ENCODE measurements at regions of chr13 and their contacts with region 1.

Region 1: DNA sequence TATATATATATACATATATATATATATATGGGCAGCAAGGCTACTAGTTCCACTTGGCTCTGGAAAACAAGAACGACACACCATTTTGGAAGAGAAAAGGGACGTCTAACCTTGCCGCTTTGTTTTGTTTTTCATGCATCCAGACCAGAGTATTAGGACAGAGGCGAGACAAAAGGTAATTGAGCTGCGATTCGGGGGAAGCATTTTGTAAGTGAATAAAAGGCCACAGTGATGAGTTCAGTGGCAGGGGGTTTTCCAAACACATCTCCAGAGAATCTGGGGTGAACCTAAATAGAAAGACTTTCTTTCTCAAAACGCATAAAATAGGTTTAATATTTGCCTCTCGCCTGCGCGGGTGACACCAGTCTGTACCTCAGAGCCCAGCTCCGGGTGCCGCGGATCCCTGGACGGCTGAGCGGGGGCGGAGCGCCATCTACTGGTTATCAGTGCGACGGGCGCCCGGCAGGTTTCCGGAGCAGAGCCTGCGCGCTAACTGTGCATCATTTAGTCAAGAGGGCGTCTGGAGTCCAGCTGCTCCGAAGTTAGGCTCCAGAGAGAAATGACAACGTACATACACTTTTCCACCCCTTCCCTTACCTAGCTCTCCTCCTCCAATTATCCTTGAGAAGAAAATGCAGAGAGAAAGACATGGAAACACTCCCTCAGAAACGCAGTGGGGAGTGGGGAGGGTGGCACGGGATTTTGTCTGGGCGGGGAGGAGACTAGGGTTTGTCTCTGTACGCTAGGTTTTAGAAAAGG is 262.3 kb downstream of the TBC1D4 start:
- DNase-seq: peak; percentile 71
- H3K4me3 Mint-ChIP-seq: peak overlapping the region; percentile 45
- H3K27ac Mint-ChIP-seq: no peak overlapping the region
- H3K4me1 Mint-ChIP-seq: peaks cover 9% of the 10 kb centered on the region
- H3K27me3 Mint-ChIP-seq: peaks cover 49% of the 10 kb centered on the region

Region 2: GRCh38 chr13:73754727-73755292 is 1464.8 kb before region 1 on chr13:
- intact Hi-C with region 1: loop called (anchors 1 kb)
- DNase-seq: no peak
- H3K4me3 Mint-ChIP-seq: no peak overlapping the region
- H3K27ac Mint-ChIP-seq: no peak overlapping the region
- H3K4me1 Mint-ChIP-seq: peaks cover 18% of the 10 kb centered on the region
- H3K27me3 Mint-ChIP-seq: no peaks in the 10 kb centered on the region

Region 3: DNA sequence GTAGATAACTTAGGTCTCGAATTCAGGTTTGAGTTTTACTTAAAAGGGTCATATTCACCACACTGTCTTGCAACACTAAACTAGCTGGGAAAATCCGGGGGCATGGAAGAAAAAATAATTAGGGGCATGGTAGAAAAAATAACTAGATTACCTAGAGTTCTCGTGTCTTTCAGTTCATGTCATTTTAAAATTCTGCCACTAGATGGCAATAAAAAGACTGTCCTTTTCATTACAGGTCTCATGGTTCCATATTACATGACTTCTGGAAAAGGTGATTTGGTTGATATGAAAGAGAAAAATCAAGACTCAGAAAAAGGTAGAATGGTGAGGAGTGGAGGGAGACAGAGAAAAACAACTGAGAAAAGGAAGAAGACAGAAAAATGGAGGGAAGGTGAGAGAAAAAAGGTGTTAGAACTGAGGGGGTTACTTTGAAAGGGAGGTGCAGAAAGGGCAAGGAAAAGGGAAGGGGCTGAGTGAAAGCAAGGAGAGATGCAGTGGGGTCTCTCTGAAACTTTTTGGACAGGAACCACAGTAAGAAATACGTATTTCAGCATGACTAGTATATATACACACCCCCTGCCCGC is 1384.4 kb before region 1 on chr13:
- intact Hi-C with region 1: loop called (anchors 1 kb)
- DNase-seq: no peak
- H3K4me3 Mint-ChIP-seq: no peak overlapping the region
- H3K27ac Mint-ChIP-seq: no peak overlapping the region
- H3K4me1 Mint-ChIP-seq: peaks cover 5% of the 10 kb centered on the region
- H3K27me3 Mint-ChIP-seq: no peaks in the 10 kb centered on the region

Region 4: GRCh38 chr13:74575729-74576125 is 643.9 kb before region 1 on chr13:
- intact Hi-C with region 1: loop called (anchors 10 kb)
- DNase-seq: peak; percentile 4
- H3K4me3 Mint-ChIP-seq: peak overlapping the region; percentile 49
- H3K27ac Mint-ChIP-seq: no peak overlapping the region
- H3K4me1 Mint-ChIP-seq: peaks cover 8% of the 10 kb centered on the region
- H3K27me3 Mint-ChIP-seq: peaks cover 26% of the 10 kb centered on the region

Region 5: DNA sequence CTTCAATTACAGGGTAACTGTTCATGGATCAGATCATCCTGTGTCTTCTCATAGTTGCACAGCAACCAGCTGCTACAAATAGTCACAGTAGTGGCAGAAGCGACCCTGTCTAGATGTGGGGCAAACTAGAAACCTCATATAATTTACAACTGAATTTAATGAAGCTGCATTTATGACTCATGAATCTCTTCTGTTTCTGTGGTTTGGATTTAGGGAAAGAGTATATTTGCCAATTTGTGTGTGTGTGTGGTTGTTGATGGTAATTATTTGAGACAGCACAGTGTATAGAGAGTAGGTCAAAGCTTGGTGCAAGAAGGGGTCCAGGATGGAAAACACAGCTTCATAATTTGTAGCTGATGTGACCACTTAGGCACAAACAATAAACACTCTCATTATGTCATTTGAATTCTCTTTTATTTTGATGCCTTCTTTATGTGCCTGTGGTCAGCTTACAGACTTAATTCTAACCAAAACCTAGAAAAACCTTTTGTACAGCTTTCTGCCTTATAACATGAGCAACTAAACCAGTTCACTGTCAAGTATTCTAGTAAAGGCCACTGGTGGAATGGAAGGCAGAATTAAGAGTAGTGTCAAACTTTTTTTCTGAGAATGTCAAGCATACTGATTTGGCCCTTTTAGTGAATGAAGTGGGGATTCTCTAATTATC is 44.2 kb after region 1 on chr13:
- intact Hi-C with region 1: no loop called
- DNase-seq: no peak
- H3K4me3 Mint-ChIP-seq: no peak overlapping the region
- H3K27ac Mint-ChIP-seq: no peak overlapping the region
- H3K4me1 Mint-ChIP-seq: no peaks in the 10 kb centered on the region
- H3K27me3 Mint-ChIP-seq: peaks cover 3% of the 10 kb centered on the region

Measured in activated T-helper 1 cell treated with anti-CD3 and anti-CD28 coated beads, Interleukin-12 subunit alpha, Interleukin-12 subunit beta, Interleukin-2, Interleukin-4 antibody, amounts not matched to agents 30 ng/mL and 10 ng/mL and 1 ng/mL, durations not matched to agents 14 hours and 24 hours and 36 hours (primary cell).